ENCODE measurements at regions of chr21 and their contacts with region 1.

Region 1: GRCh38 chr21:33199516-33200217 is 30.1 kb upstream of the IFNAR2 start:
- DNase-seq: peak; percentile 83
- H3K4me3 Mint-ChIP-seq: no peak overlapping the region
- H3K27ac Mint-ChIP-seq: no peak overlapping the region
- H3K4me1 Mint-ChIP-seq: peaks cover 25% of the 10 kb centered on the region
- H3K27me3 Mint-ChIP-seq: peaks cover 10% of the 10 kb centered on the region

Region 2: DNA sequence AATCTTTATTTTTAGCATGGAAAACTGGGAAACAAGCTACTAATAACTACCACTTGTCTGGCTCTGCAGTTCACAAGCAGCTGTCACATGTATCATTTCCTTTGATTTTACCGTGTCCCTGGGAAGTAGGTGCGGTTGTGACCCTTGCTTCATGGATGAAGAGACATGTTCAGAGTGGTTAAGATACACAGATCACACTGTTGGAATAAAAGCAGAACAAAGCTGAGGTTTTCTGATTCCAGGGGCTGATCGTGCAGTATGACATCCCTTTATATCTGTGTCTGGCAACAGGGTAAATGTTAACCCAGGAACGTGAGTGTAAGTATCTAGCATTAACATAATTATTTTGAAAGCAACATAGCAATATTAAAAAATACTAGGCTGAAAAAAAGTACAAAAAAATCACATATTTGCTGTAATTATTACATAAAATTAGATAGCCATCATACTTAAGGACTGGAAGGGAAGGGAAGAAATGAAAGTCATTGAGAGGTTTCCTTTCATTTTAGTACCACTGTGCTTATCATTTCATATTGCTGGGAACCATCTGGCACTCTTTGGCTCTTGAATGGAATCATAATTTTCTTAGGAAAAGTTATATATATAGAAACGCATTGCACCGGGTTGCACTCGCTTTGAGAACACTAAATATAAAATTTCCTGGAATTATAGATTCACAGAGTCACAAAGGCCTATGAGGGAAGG is 365.3 kb before region 1 on chr21:
- CTCF ChIA-PET with region 1: interaction called, 14 read pairs
- POLR2A ChIA-PET with region 1: no interaction called
- DNase-seq: no peak
- H3K4me3 Mint-ChIP-seq: no peak overlapping the region
- H3K27ac Mint-ChIP-seq: no peak overlapping the region
- H3K4me1 Mint-ChIP-seq: no peaks in the 10 kb centered on the region
- H3K27me3 Mint-ChIP-seq: peaks cover 11% of the 10 kb centered on the region

Region 3: GRCh38 chr21:32994305-32994704 is 205.4 kb before region 1 on chr21:
- CTCF ChIA-PET with region 1: interaction called, 18 read pairs
- POLR2A ChIA-PET with region 1: no interaction called
- DNase-seq: no peak
- H3K4me3 Mint-ChIP-seq: no peak overlapping the region
- H3K27ac Mint-ChIP-seq: no peak overlapping the region
- H3K4me1 Mint-ChIP-seq: no peaks in the 10 kb centered on the region
- H3K27me3 Mint-ChIP-seq: peaks cover 48% of the 10 kb centered on the region

Region 4: GRCh38 chr21:33099131-33099530 is 100.5 kb before region 1 on chr21:
- CTCF ChIA-PET with region 1: no interaction called
- POLR2A ChIA-PET with region 1: no interaction called
- DNase-seq: no peak
- H3K4me3 Mint-ChIP-seq: no peak overlapping the region
- H3K27ac Mint-ChIP-seq: no peak overlapping the region
- H3K4me1 Mint-ChIP-seq: no peaks in the 10 kb centered on the region
- H3K27me3 Mint-ChIP-seq: peaks cover 19% of the 10 kb centered on the region

Region 5: DNA sequence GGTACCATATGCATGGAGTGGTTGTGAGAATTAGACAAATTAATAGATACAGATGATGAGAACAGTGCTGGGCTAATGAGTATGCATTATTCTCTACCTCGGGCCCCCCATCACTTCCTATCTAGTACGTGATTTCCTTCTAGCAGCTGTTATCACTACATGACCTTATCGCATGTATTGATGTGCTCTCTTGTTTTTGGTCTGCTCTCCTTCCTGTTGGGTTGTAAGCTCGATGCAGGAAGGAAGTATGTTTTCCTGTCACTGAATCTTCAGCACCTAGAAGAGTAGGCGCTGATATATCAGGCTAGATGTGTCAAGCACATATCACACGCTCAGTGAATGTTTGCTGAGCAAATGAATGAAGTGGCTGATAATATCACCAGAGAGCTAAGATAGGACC is 13.8 kb before region 1 on chr21:
- CTCF ChIA-PET with region 1: interaction called, 31 read pairs
- POLR2A ChIA-PET with region 1: no interaction called
- DNase-seq: peak; percentile 43
- H3K4me3 Mint-ChIP-seq: peak overlapping the region; percentile 49
- H3K27ac Mint-ChIP-seq: peak overlapping the region; percentile 92
- H3K4me1 Mint-ChIP-seq: peaks cover 35% of the 10 kb centered on the region
- H3K27me3 Mint-ChIP-seq: peaks cover 23% of the 10 kb centered on the region

Region 6: DNA sequence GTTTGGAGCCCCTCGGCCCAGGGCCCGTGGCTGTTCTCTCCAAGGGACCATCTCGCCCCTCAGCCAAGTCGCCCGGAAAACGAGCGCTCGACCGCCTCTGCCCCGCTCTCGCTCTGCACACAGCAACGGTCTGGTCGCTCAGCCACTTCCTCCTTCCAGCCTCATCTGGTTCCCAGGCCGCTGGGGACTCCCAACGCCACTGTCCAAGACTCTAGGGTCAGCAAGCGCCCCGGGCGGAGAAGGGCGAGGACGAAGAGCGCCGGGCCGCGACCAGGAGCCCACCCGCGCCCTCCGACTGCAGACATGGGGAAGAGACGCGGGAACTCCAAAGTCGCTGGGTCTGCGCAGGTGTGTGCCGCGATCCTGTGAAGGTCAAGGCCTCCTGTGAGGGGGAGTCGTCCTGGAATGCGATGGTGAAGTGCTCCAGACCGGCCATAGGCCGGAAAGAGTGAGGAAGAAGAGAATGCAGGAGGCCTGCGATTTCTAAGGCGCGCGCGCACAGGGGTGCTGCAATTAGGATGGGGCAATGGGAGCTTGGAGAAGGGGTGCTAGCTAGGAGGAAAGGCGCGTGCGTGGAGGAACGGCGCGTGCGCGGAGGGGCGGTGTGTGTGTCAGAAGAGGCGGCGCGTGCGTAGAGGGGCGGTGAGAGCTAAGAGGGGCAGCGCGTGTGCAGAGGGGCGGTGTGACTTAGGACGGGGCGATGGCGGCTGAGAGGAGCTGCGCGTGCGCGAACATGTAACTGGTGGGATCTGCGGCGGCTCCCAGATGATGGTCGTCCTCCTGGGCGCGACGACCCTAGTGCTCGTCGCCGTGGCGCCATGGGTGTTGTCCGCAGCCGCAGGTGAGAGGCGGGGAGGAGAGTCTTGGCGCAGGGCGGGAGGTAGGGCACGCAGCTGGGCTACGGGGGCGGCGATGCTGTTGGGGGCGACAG is 124.9 kb after region 1 on chr21 and contains the start of gene IFNAR1:
- CTCF ChIA-PET with region 1: interaction called, 10 read pairs
- POLR2A ChIA-PET with region 1: interaction called, 7 read pairs
- DNase-seq: peak; percentile 98
- H3K4me3 Mint-ChIP-seq: no peak within 1 kb of the TSS
- H3K27ac Mint-ChIP-seq: no peak within 1 kb of the TSS
- H3K4me1 Mint-ChIP-seq: peaks cover 21% of the 10 kb centered on the region
- H3K27me3 Mint-ChIP-seq: no peaks in the 10 kb centered on the region
- total RNA-seq, gene IFNAR1: 38.6 to 39.3 TPM

Region 7: DNA sequence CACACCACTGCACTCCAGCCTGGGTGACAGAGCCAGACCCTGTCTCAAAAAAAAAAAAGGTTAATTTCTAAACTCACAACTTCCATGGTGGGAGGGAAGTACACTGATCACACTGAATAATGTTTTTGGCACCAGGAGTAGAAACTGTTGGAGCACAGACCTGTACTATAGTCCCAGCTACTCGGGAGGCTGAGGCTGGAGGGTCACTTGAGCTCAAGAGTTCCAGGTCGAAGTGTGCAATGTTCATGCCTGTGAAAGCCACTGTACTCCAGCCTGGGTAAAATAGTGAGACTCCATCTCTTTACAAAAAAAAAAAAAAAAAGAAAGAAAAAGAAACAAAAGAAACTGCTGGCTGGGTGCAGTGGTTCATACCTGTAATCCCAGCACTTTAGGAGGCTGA is 244.8 kb after region 1 on chr21:
- CTCF ChIA-PET with region 1: interaction called, 37 read pairs
- POLR2A ChIA-PET with region 1: interaction called, 5 read pairs
- DNase-seq: no peak
- H3K4me3 Mint-ChIP-seq: no peak overlapping the region
- H3K27ac Mint-ChIP-seq: no peak overlapping the region
- H3K4me1 Mint-ChIP-seq: peaks cover 4% of the 10 kb centered on the region
- H3K27me3 Mint-ChIP-seq: no peaks in the 10 kb centered on the region